GM12878 (cell line): ENCODE measurements at regions of chr2 and their contacts with region 1.

Region 1: DNA sequence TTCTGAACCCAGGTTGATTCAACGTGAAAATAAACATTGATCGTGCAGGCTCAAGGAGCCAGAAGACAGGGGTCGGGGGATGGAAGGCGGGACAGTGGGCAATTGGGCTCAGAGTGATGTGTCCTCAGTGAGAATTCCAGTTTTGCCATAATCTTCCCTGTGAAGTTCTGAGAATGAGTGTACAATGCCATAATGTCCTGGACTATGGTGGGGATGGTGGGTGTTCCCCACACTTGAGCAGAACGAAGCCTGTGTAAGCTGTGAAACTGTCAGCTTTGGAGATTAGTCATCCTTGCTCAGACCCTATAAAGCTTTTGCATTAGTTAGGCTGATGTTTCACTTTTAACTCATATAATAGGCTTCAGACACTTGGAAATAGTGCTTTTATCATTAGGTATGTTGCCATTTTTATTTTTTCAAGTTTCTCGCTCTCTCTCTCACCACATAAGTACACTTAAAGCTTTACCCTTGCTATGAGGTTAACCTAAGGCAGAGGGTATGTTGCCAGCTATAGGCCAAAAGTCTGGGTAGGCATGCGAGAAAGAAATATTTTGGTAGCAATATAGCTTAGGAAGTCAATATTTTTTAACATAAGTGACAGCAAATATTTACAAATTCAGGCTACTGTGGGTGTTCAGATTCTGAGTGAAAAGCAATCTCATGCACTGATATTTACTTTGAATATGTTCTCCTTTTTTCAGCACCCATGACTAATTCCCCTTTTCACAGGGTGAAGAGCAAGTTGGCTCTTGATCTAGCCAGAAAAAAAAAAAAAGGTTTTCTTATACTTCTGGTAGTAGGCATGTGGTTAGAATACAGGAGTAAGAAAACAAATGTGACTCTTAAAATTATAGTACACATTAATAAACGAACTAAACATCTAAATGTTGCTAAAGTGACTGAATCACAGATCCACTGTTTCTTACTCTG is 47.2 kb downstream of the CDC42EP3 start:
- DNase-seq: peak; percentile 93
- ATAC-seq: peak; percentile 79
- H3K4me3 ChIP-seq: peak overlapping the region; percentile 24; the same call in 1 of the 2 replicates
- H3K27ac ChIP-seq: peak overlapping the region; percentile 97
- H3K4me1 ChIP-seq: peaks cover 54% of the 10 kb centered on the region
- H3K27me3 ChIP-seq: no peaks in the 10 kb centered on the region
- CTCF ChIP-seq: no peak
- EP300 ChIP-seq: peak; percentile 56 to 80
- POLR2A ChIP-seq: no peak
- RAD21 ChIP-seq: peak; percentile 1; the same call in 1 of the 2 replicates

Region 2: DNA sequence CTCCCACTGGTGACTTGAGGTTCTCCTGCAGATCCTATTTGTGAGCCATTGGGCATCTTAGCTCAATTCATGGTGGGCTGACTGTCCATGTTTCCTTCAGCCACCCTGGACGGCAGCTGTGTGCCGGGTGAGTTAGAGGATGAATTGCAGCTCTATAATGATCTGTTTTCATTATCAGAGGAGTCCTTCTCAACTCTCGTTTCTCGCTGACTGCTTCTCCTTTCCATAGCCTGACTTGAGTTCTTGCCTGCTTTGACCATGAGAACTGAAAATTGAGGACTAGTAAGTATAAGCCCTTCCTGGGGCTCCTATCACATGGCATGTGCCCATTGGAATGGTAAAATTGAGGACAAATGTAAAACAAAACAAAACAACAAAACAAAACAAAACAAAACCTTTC is 74.6 kb before region 1 on chr2:
- CTCF ChIA-PET with region 1: interaction called, 10 read pairs
- POLR2A ChIA-PET with region 1: interaction called, 9 read pairs
- RAD21 ChIA-PET with region 1: interaction called, 95 read pairs
- SMC1A ChIA-PET with region 1: interaction called, 97 read pairs
- in situ Hi-C with region 1: no loop called
- intact Hi-C with region 1: no loop called
- DNase-seq: no peak
- ATAC-seq: peak; percentile 87
- H3K4me3 ChIP-seq: peak overlapping the region; percentile 4; the same call in 1 of the 2 replicates
- H3K27ac ChIP-seq: peak overlapping the region; percentile 95
- H3K4me1 ChIP-seq: peaks cover 36% of the 10 kb centered on the region
- H3K27me3 ChIP-seq: no peaks in the 10 kb centered on the region
- CTCF ChIP-seq: no peak
- EP300 ChIP-seq: no peak
- POLR2A ChIP-seq: no peak
- RAD21 ChIP-seq: no peak

Region 3: GRCh38 chr2:37570773-37571586 is 53.3 kb before region 1 on chr2:
- CTCF ChIA-PET with region 1: interaction called, 22 read pairs
- POLR2A ChIA-PET with region 1: interaction called, 84 read pairs
- RAD21 ChIA-PET with region 1: interaction called, 123 read pairs
- SMC1A ChIA-PET with region 1: interaction called, 102 read pairs
- in situ Hi-C with region 1: no loop called
- intact Hi-C with region 1: loop called (anchors 1 kb)
- DNase-seq: peak; percentile 98
- ATAC-seq: peak; percentile 87
- H3K4me3 ChIP-seq: peak overlapping the region; percentile 0; the same call in 1 of the 2 replicates
- H3K27ac ChIP-seq: peak overlapping the region; percentile 90
- H3K4me1 ChIP-seq: peaks cover 41% of the 10 kb centered on the region
- H3K27me3 ChIP-seq: no peaks in the 10 kb centered on the region
- CTCF ChIP-seq: no peak
- EP300 ChIP-seq: peak; percentile 86 to 87
- POLR2A ChIP-seq: peak; percentile 59
- RAD21 ChIP-seq: peak; percentile 45

Region 4: GRCh38 chr2:37600735-37601134 is 23.5 kb before region 1 on chr2:
- CTCF ChIA-PET with region 1: interaction called, 4 read pairs
- POLR2A ChIA-PET with region 1: interaction called, 13 read pairs
- RAD21 ChIA-PET with region 1: interaction called, 13 read pairs
- SMC1A ChIA-PET with region 1: interaction called, 122 read pairs
- in situ Hi-C with region 1: no loop called
- intact Hi-C with region 1: no loop called
- DNase-seq: no peak
- ATAC-seq: peak; percentile 91
- H3K4me3 ChIP-seq: peak overlapping the region; percentile 23; the same call in 1 of the 2 replicates
- H3K27ac ChIP-seq: peak overlapping the region; percentile 48; the same call in 1 of the 2 replicates
- H3K4me1 ChIP-seq: peaks cover 31% of the 10 kb centered on the region
- H3K27me3 ChIP-seq: no peaks in the 10 kb centered on the region
- CTCF ChIP-seq: no peak
- EP300 ChIP-seq: peak in 1 of 2 experiments; percentile 52; a peak in 1 of 4 replicates
- POLR2A ChIP-seq: no peak
- RAD21 ChIP-seq: no peak

Region 5: GRCh38 chr2:37641582-37642171 is 17.4 kb after region 1 on chr2:
- CTCF ChIA-PET with region 1: interaction called, 3 read pairs
- POLR2A ChIA-PET with region 1: interaction called, 62 read pairs
- RAD21 ChIA-PET with region 1: interaction called, 18 read pairs
- SMC1A ChIA-PET with region 1: interaction called, 118 read pairs
- in situ Hi-C with region 1: no loop called
- intact Hi-C with region 1: no loop called
- DNase-seq: no peak
- ATAC-seq: no peak
- H3K4me3 ChIP-seq: no peak overlapping the region
- H3K27ac ChIP-seq: no peak overlapping the region
- H3K4me1 ChIP-seq: peaks cover 15% of the 10 kb centered on the region
- H3K27me3 ChIP-seq: no peaks in the 10 kb centered on the region
- CTCF ChIP-seq: no peak
- EP300 ChIP-seq: no peak
- POLR2A ChIP-seq: no peak
- RAD21 ChIP-seq: no peak

Region 6: GRCh38 chr2:37653805-37654378 is 29.7 kb after region 1 on chr2:
- CTCF ChIA-PET with region 1: interaction called, 14 read pairs
- POLR2A ChIA-PET with region 1: interaction called, 166 read pairs
- RAD21 ChIA-PET with region 1: interaction called, 176 read pairs
- SMC1A ChIA-PET with region 1: interaction called, 147 read pairs
- in situ Hi-C with region 1: no loop called
- intact Hi-C with region 1: loop called (anchors 2 kb)
- DNase-seq: peak; percentile 84
- ATAC-seq: peak; percentile 78
- H3K4me3 ChIP-seq: peak overlapping the region; percentile 75
- H3K27ac ChIP-seq: peak overlapping the region; percentile 99
- H3K4me1 ChIP-seq: peaks cover 69% of the 10 kb centered on the region
- H3K27me3 ChIP-seq: no peaks in the 10 kb centered on the region
- CTCF ChIP-seq: no peak
- EP300 ChIP-seq: peak; percentile 91 to 94
- POLR2A ChIP-seq: peak; percentile 93
- RAD21 ChIP-seq: peak; percentile 4; the same call in 1 of the 2 replicates

Region 7: GRCh38 chr2:37720533-37721200 is 96.4 kb after region 1 on chr2:
- CTCF ChIA-PET with region 1: no interaction called
- POLR2A ChIA-PET with region 1: no interaction called
- RAD21 ChIA-PET with region 1: no interaction called
- SMC1A ChIA-PET with region 1: no interaction called
- in situ Hi-C with region 1: no loop called
- intact Hi-C with region 1: no loop called
- DNase-seq: no peak
- ATAC-seq: no peak
- H3K4me3 ChIP-seq: no peak overlapping the region
- H3K27ac ChIP-seq: no peak overlapping the region
- H3K4me1 ChIP-seq: no peaks in the 10 kb centered on the region
- H3K27me3 ChIP-seq: no peaks in the 10 kb centered on the region
- CTCF ChIP-seq: no peak
- EP300 ChIP-seq: no peak
- POLR2A ChIP-seq: no peak
- RAD21 ChIP-seq: no peak

Region 8: GRCh38 chr2:37781028-37781427 is 156.8 kb after region 1 on chr2:
- CTCF ChIA-PET with region 1: no interaction called
- POLR2A ChIA-PET with region 1: no interaction called
- RAD21 ChIA-PET with region 1: no interaction called
- SMC1A ChIA-PET with region 1: no interaction called
- in situ Hi-C with region 1: no loop called
- intact Hi-C with region 1: no loop called
- DNase-seq: no peak
- ATAC-seq: no peak
- H3K4me3 ChIP-seq: no peak overlapping the region
- H3K27ac ChIP-seq: no peak overlapping the region
- H3K4me1 ChIP-seq: no peaks in the 10 kb centered on the region
- H3K27me3 ChIP-seq: no peaks in the 10 kb centered on the region
- CTCF ChIP-seq: no peak
- EP300 ChIP-seq: no peak
- POLR2A ChIP-seq: no peak
- RAD21 ChIP-seq: no peak